HepG2 (cell line): ENCODE measurements at regions of chr2 and their contacts with region 1.

Region 1: GRCh38 chr2:196639180-196640030 is at the start of gene CCDC150:
- DNase-seq: peak; percentile 94
- ATAC-seq: peak; percentile 99
- H3K4me3 ChIP-seq: peak within 1 kb of the TSS; percentile 75 to 91 (median 77)
- H3K27ac ChIP-seq: peak within 1 kb of the TSS; percentile 73
- H3K4me1 ChIP-seq: peaks cover 23% of the 10 kb centered on the region
- H3K27me3 ChIP-seq: no peaks in the 10 kb centered on the region
- CTCF ChIP-seq: peak; percentile 65
- EP300 ChIP-seq: peak; percentile 18 to 29; a peak in 2 of 4 replicates
- POLR2A ChIP-seq: peak; percentile 79 to 84
- RAD21 ChIP-seq: 0 out of 2 replicates have a peak, but pooled peaks have one; percentile 53
- total RNA-seq, gene CCDC150: 9.1 and 32.6 TPM in 2 replicates

Region 2: DNA sequence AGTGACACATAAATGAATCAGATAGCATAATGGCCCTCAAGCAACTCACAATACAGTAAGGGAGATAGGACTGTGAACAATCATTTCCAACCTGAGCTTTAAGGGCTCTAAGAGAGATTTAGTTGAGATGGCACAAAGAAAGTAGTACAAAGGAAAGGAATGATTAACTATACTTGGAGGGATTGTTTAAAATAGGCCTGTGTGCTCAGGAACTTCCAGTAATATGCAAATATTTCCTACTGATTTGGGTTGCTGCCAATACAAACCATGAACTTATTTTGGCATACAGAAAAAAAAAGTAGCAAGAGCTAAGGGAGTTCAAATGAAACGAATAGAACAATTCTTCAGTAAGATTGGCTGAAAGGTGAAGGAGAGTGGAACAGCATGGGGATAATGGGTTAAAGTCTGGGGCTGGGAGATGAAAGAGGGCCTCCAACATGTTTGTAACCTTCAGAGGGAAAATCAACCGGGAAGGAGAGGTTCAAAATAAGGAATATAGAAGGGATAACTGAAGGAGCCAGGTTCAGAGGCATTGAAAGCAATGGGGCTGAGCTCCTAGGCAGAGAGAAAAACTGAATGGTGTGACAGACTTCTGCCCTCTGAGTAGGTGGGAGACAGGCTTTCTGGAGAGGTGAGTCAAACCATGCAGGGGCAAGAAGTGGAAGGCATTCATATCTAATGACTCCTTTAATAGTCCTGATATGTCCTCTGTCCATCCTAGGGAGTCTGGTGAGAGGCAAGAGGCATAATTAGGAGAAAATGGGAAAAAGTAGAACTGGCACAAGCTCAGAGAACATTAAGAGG is 654.3 kb before region 1 on chr2:
- CTCF ChIA-PET with region 1: no interaction called
- POLR2A ChIA-PET with region 1: no interaction called
- in situ Hi-C with region 1: no loop called
- intact Hi-C with region 1: loop called (anchors 5 kb)
- DNase-seq: no peak
- ATAC-seq: no peak; the same call in 2 of the 3 replicates
- H3K4me3 ChIP-seq: no peak overlapping the region
- H3K27ac ChIP-seq: no peak overlapping the region
- H3K4me1 ChIP-seq: no peaks in the 10 kb centered on the region
- H3K27me3 ChIP-seq: no peaks in the 10 kb centered on the region
- CTCF ChIP-seq: no peak
- EP300 ChIP-seq: no peak
- POLR2A ChIP-seq: no peak
- RAD21 ChIP-seq: no peak

Region 3: GRCh38 chr2:196592912-196593881 is 46.2 kb before region 1 on chr2:
- CTCF ChIA-PET with region 1: no interaction called
- POLR2A ChIA-PET with region 1: no interaction called
- in situ Hi-C with region 1: no loop called
- intact Hi-C with region 1: loop called (anchors 2 kb)
- DNase-seq: no peak
- ATAC-seq: peak; percentile 88
- H3K4me3 ChIP-seq: peak within 1 kb of the TSS; percentile 56 to 78 (median 60)
- H3K27ac ChIP-seq: no peak within 1 kb of the TSS
- H3K4me1 ChIP-seq: peaks cover 11% of the 10 kb centered on the region
- H3K27me3 ChIP-seq: peaks cover 6 to 54% of the 10 kb centered on the region in 2 experiments; a peak in 4 of 5 replicates
- CTCF ChIP-seq: no peak
- EP300 ChIP-seq: no peak
- POLR2A ChIP-seq: no peak
- RAD21 ChIP-seq: no peak; the same call in 1 of the 2 replicates

Region 4: GRCh38 chr2:196750982-196751635 is 111.7 kb after region 1 on chr2:
- CTCF ChIA-PET with region 1: no interaction called
- POLR2A ChIA-PET with region 1: no interaction called
- in situ Hi-C with region 1: no loop called
- intact Hi-C with region 1: loop called (anchors 2 kb)
- DNase-seq: peak; percentile 68
- ATAC-seq: peak; percentile 93
- H3K4me3 ChIP-seq: no peak overlapping the region
- H3K27ac ChIP-seq: no peak overlapping the region
- H3K4me1 ChIP-seq: peaks cover 38% of the 10 kb centered on the region
- H3K27me3 ChIP-seq: no peaks in the 10 kb centered on the region
- CTCF ChIP-seq: peak; percentile 78
- EP300 ChIP-seq: no peak
- POLR2A ChIP-seq: no peak
- RAD21 ChIP-seq: peak; percentile 44; the same call in 1 of the 2 replicates

Region 5: DNA sequence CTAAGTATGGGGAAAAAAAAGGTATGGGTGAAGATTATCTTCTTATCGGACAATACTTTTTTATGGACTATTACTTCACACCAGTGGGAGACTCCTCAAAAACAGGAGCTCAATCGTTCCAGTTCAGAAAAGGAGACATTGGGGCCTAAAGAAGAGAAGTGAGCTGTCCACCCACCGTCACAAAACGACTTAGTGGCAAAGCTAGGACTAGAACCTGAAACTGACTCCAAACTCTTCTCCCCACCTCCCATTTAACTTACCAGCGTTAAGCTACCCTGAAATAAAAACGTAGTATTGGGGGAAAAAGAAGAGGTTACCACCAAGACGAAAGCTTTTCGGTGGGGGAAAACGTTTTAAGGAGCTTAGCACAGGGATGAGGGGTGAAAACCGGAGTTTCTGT is 159.6 kb after region 1 on chr2:
- CTCF ChIA-PET with region 1: no interaction called
- POLR2A ChIA-PET with region 1: interaction called, 9 read pairs
- in situ Hi-C with region 1: no loop called
- intact Hi-C with region 1: loop called (anchors 2 kb)
- DNase-seq: peak; percentile 23
- ATAC-seq: peak; percentile 53
- H3K4me3 ChIP-seq: peak overlapping the region; percentile 66 to 99 (median 83)
- H3K27ac ChIP-seq: peak overlapping the region; percentile 73
- H3K4me1 ChIP-seq: peaks cover 37% of the 10 kb centered on the region
- H3K27me3 ChIP-seq: peaks cover 0 to 4% of the 10 kb centered on the region in 2 experiments; a peak in 1 of 5 replicates
- CTCF ChIP-seq: no peak
- EP300 ChIP-seq: no peak
- POLR2A ChIP-seq: no peak
- RAD21 ChIP-seq: no peak

Region 6: GRCh38 chr2:196926562-196927375 is 287.4 kb after region 1 on chr2 and contains the start of gene PGAP1:
- CTCF ChIA-PET with region 1: no interaction called
- POLR2A ChIA-PET with region 1: no interaction called
- in situ Hi-C with region 1: no loop called
- intact Hi-C with region 1: loop called (anchors 5 kb)
- DNase-seq: peak; percentile 90
- ATAC-seq: peak; percentile 93
- H3K4me3 ChIP-seq: peak within 1 kb of the TSS; percentile 96 to 100 (median 98)
- H3K27ac ChIP-seq: peak within 1 kb of the TSS; percentile 84
- H3K4me1 ChIP-seq: peaks cover 29% of the 10 kb centered on the region
- H3K27me3 ChIP-seq: no peaks in the 10 kb centered on the region; a peak in 2 of 5 replicates
- CTCF ChIP-seq: peak; percentile 22; the same call in 1 of the 2 replicates
- EP300 ChIP-seq: peak in 1 of 2 experiments; percentile 10; a peak in 2 of 4 replicates
- POLR2A ChIP-seq: peak; percentile 54 to 74; a peak in 3 of 4 replicates
- RAD21 ChIP-seq: 0 out of 2 replicates have a peak, but pooled peaks have one; percentile 9
- total RNA-seq, gene PGAP1: 4.8 and 6.4 TPM in 2 replicates